ENCODE measurements at regions of chr1 and their contacts with region 1.

Region 1: GRCh38 chr1:219876798-219877209 is 51.6 kb downstream of the SLC30A10 start:
- DNase-seq: peak; percentile 23 to 85 (median 54)
- ATAC-seq: peak; percentile 87
- H3K4me3 ChIP-seq: no peak overlapping the region
- H3K27ac ChIP-seq: 0 out of 3 replicates have a peak overlapping the region, but pooled peaks have one; percentile 4
- H3K4me1 ChIP-seq: peaks cover 0 to 20% of the 10 kb centered on the region in 2 experiments; a peak in 2 of 5 replicates
- H3K27me3 ChIP-seq: no peaks in the 10 kb centered on the region
- CTCF ChIP-seq: peak; percentile 77 to 91 (median 78)
- EP300 ChIP-seq: peak; percentile 19; the same call in 1 of the 2 replicates
- POLR2A ChIP-seq: no peak
- RAD21 ChIP-seq: peak; percentile 94 to 96

Region 2: DNA sequence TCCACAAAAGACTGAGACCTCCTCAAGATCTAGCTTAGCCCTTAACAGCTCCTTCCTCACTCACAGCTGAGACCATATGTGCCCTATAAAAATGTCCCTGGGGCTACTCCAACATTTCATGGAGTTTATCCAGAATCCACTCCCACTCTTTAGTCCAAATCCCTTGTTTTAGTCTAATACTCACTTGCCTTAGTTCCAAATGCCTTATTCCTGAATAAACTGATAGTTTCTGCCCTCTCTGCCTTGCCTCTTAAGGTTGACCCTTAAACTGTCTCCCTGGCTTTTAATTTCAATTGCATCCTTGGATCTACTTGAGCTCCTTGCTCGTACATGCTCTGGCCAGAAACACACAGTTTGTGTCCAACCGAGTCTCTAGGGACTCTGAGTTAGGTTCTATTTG is 750.4 kb before region 1 on chr1:
- CTCF ChIA-PET with region 1: no interaction called
- POLR2A ChIA-PET with region 1: no interaction called
- in situ Hi-C with region 1: no loop called
- intact Hi-C with region 1: no loop called
- DNase-seq: no peak
- ATAC-seq: peak; percentile 8
- H3K4me3 ChIP-seq: no peak overlapping the region
- H3K27ac ChIP-seq: no peak overlapping the region
- H3K4me1 ChIP-seq: peaks cover 0 to 6% of the 10 kb centered on the region in 2 experiments; a peak in 2 of 5 replicates
- H3K27me3 ChIP-seq: no peaks in the 10 kb centered on the region
- CTCF ChIP-seq: no peak
- EP300 ChIP-seq: no peak
- POLR2A ChIP-seq: no peak
- RAD21 ChIP-seq: no peak

Region 3: DNA sequence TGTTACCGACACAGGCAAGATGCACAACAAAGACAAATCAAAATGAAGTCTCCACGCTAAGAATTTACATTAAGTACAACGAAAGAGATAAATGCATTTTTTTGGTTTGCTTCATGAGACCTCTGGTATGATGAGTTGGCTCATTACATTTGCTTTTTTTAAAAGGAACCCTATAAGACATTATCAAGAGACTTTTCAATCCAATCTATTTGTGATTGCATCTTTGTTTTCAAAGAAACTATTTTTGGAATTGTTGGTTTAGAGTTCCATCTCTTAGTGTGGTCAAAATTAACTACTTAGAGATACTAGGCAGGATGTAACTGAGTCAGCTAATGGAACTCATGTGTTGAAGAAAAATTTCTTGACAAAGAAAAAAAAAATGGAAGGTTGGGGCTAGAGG is 464.0 kb before region 1 on chr1:
- CTCF ChIA-PET with region 1: no interaction called
- POLR2A ChIA-PET with region 1: no interaction called
- in situ Hi-C with region 1: no loop called
- intact Hi-C with region 1: no loop called
- DNase-seq: no peak
- ATAC-seq: no peak
- H3K4me3 ChIP-seq: no peak overlapping the region
- H3K27ac ChIP-seq: no peak overlapping the region
- H3K4me1 ChIP-seq: no peaks in the 10 kb centered on the region
- H3K27me3 ChIP-seq: no peaks in the 10 kb centered on the region
- CTCF ChIP-seq: no peak
- EP300 ChIP-seq: no peak
- POLR2A ChIP-seq: no peak
- RAD21 ChIP-seq: no peak

Region 4: DNA sequence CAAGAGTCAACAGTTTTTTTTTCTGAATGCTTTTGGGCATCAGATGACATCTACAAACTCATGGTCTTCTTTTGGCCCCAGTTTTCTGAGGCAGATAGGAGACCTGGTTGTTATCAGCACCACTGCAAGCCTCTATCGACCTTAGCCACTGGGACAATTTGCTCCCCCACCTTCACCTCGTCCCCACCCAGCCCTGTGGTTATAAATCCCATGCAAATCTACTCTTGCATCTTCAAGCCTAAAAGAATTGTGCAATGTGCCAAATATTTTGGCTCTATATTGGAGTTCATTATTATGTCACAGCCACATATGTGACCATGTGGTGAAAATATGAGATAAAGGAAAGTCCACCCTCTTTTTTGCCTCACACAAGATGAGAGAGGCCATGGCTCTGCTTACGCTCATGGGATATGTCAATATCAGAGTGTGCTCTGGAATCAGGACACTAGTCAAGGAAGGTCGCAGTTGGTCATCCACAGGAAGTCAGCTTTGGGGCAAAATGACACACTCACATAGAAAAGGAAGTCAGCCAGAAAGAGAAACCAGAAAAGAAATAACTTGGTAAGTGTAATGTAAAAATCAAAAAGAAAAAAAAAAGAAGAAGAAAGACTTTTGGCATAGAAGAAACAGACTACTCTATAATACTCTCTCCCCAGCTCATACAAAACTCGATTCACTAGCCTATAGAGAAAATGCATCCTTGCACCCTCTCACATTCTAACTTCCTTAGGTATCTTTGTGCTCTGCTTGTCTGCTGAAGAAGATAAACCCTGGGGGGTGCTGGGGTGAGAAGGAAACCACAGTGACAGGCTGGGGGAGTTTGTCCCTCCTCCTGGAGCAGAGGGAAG is 30.3 kb after region 1 on chr1:
- CTCF ChIA-PET with region 1: no interaction called
- POLR2A ChIA-PET with region 1: interaction called, 8 read pairs
- in situ Hi-C with region 1: no loop called
- intact Hi-C with region 1: loop called (anchors 1 kb)
- DNase-seq: peak; percentile 87 to 99 (median 91)
- ATAC-seq: peak; percentile 82
- H3K4me3 ChIP-seq: peak overlapping the region; percentile 3; the same call in 1 of the 2 replicates
- H3K27ac ChIP-seq: peak overlapping the region; percentile 79
- H3K4me1 ChIP-seq: peaks cover 43 to 80% of the 10 kb centered on the region in 2 experiments
- H3K27me3 ChIP-seq: no peaks in the 10 kb centered on the region
- CTCF ChIP-seq: no peak
- EP300 ChIP-seq: peak; percentile 98
- POLR2A ChIP-seq: peak; percentile 41; the same call in 1 of the 2 replicates
- RAD21 ChIP-seq: peak; percentile 17 to 26; a peak in 2 of 4 replicates

Region 5: DNA sequence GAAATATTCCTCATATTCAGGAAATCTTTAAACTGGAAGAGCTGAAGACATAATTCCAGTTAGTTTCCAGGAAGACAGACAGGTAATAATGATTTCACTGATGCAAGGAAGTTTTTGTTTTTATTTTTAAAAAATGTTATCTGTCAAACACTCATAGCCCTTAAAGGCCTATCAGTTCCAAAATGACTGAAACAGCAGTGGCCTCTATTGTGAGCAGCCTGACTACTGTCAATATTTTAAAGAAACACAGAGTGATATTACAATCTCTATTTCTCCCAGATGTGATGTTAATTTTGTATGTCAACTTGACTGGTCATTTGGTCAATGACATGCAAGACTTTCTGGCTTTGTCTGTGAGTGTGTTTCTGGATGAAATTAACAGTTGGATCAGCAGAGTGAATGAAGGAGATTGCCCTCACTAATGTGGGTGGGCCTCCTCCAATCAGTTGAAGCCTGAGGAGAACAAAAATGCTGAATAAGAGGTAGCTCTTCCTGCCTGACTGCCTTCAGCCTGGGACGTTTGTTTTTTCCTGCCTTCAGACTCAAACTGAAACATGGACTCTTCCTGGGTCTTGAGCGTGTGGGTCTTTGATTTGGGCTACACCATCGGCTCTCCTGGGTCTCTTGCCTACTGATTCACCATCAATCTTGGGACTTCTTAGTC is 82.9 kb after region 1 on chr1:
- CTCF ChIA-PET with region 1: no interaction called
- POLR2A ChIA-PET with region 1: no interaction called
- in situ Hi-C with region 1: loop called (anchors 10 kb)
- intact Hi-C with region 1: no loop called
- DNase-seq: peak in 1 of 4 experiments; percentile 56
- ATAC-seq: peak; percentile 46
- H3K4me3 ChIP-seq: no peak overlapping the region
- H3K27ac ChIP-seq: peak overlapping the region; percentile 33; the same call in 1 of the 3 replicates
- H3K4me1 ChIP-seq: peaks cover 0 to 13% of the 10 kb centered on the region in 2 experiments; a peak in 3 of 5 replicates
- H3K27me3 ChIP-seq: no peaks in the 10 kb centered on the region
- CTCF ChIP-seq: no peak
- EP300 ChIP-seq: no peak
- POLR2A ChIP-seq: no peak
- RAD21 ChIP-seq: no peak

Region 6: DNA sequence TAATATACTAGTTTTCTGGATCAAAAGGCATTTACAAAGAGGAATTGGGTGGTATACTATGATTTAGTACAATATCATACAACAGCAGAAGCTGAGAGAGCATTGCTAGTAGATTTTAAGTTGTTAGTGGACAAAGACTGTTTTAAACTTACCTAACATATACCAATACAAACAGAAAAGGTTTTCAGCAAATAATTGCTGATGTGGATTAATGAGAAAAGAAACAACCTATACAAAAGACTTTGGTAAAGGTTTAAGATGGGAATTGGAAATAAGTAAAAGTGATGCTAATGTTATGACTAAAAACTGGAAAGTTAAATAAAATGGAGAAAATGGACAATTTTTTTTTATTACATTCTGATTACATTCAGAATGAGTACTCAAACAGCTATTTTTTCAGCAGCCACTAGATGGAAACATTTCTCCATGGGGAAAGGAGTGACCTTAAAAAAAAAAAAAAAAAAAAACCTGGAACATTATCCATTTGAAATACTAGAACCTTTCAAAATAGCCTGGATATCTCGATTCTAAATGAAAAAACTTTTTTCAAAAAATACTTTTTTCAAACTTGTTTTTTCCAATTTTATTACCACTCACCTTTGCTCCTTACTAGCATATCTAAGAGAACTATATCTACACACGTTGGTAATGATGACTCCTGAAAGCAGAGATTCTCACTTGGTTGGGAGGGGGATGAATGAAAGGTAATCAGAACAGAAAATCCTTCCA is 114.1 kb after region 1 on chr1:
- CTCF ChIA-PET with region 1: no interaction called
- POLR2A ChIA-PET with region 1: no interaction called
- in situ Hi-C with region 1: no loop called
- intact Hi-C with region 1: loop called (anchors 2 kb)
- DNase-seq: peak in 3 of 4 experiments; percentile 26 to 56 (median 28)
- ATAC-seq: peak; percentile 52
- H3K4me3 ChIP-seq: no peak overlapping the region
- H3K27ac ChIP-seq: no peak overlapping the region
- H3K4me1 ChIP-seq: no peaks in the 10 kb centered on the region; a peak in 1 of 5 replicates
- H3K27me3 ChIP-seq: no peaks in the 10 kb centered on the region
- CTCF ChIP-seq: peak in 2 of 3 experiments; percentile 28 to 76; a peak in 3 of 6 replicates
- EP300 ChIP-seq: no peak
- POLR2A ChIP-seq: no peak
- RAD21 ChIP-seq: peak; percentile 39 to 48; a peak in 3 of 4 replicates

Region 7: GRCh38 chr1:220217383-220217988 is 340.7 kb after region 1 on chr1:
- CTCF ChIA-PET with region 1: no interaction called
- POLR2A ChIA-PET with region 1: no interaction called
- in situ Hi-C with region 1: no loop called
- intact Hi-C with region 1: loop called (anchors 2 kb)
- DNase-seq: peak in 2 of 4 experiments; percentile 42 to 49
- ATAC-seq: peak; percentile 76
- H3K4me3 ChIP-seq: no peak overlapping the region
- H3K27ac ChIP-seq: no peak overlapping the region
- H3K4me1 ChIP-seq: peaks cover 0 to 9% of the 10 kb centered on the region in 2 experiments; a peak in 1 of 5 replicates
- H3K27me3 ChIP-seq: no peaks in the 10 kb centered on the region
- CTCF ChIP-seq: peak; percentile 56 to 66 (median 63); a peak in 5 of 6 replicates
- EP300 ChIP-seq: no peak
- POLR2A ChIP-seq: no peak
- RAD21 ChIP-seq: no peak; a peak in 1 of 4 replicates

Measured in K562 (cell line).